Activated T-helper 1 cell treated with anti-CD3 and anti-CD28 coated beads, Interleukin-12 subunit alpha, Interleukin-12 subunit beta, Interleukin-2, Interleukin-4 antibody, amounts not matched to agents 30 ng/mL and 10 ng/mL and 1 ng/mL, durations not matched to agents 14 hours and 24 hours and 36 hours (primary cell): ENCODE measurements at regions of chr11 and their contacts with region 1.

Region 1: DNA sequence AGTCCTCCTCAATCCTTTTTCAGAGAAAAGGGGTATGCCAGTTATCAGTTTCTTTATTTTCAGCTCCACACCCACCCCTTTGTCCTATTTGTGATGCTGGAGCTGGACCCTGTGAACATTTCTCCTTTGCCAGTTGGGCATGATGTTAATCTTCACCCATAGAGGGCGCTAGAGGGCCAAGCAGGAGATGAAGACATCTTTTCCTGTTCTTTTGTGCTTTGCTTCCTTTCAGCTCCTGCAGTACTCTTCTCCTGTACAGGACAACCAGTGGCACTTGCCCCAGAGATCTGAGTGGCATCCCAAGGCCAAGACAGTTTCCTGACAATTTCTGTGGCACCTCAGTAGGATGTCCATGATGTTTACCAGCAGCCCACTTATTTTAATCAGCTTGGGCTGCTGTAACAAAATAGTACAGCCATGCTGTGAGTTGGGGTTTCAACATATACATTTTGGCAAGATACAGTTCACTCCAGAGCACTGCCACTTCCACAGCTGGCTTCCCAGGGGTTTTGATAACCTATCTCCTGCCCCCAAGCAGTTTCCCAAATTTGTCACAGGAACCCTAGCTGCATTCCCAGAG is 4.6 kb downstream of the SAA2 start:
- DNase-seq: peak; percentile 65
- H3K4me3 Mint-ChIP-seq: no peak overlapping the region
- H3K27ac Mint-ChIP-seq: peak overlapping the region; percentile 10
- H3K4me1 Mint-ChIP-seq: peaks cover 39% of the 10 kb centered on the region
- H3K27me3 Mint-ChIP-seq: peaks cover 27% of the 10 kb centered on the region

Region 2: DNA sequence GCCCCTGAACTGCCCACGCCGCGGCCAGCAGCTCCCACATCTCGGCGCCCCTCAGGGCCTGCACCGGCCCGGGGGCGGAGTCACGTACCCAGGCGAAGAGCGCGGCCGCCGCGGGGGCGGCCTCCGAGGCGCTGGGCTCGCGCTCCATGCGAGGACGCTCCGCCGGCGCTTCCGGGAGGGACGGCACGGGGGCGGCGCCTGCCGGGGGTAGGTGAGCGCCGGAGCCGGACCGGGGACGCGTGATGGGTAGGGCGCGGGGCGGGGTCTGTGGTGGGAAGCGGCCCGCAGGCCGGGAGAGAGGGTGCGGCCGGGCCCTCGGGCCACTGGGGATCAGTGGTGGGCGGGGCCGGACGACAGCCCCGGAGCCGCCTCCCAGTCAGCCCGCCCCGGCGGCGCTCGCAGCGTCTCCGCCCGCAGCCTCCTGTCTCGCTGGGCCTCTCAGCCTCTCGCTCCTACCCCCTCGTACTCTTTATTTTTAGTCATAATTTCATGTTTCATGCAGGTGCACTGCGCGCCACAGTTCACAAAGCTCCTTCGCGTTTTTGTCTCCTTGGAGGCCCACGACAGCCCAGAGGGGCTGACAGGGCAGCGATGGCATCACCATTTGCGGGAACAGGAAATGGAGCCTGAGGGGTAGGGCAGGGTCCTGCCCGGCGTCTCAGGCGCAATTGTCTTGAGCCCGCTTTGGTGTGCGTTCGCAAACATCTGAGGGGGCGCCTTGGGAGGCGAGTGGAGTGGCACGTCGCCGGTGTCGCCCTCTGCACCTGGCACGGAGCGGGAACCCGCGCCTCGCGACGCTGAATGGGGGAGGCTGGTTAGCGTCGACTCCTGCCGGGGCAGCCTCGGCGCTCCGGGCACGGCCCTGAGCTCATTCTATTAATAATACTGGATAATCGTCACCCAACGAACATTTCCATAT is 230.8 kb before region 1 on chr11 and contains the start of gene SERGEF:
- intact Hi-C with region 1: loop called (anchors 10 kb)
- DNase-seq: peak; percentile 92
- H3K4me3 Mint-ChIP-seq: peak within 1 kb of the TSS; percentile 97
- H3K27ac Mint-ChIP-seq: peak within 1 kb of the TSS; percentile 98
- H3K4me1 Mint-ChIP-seq: peaks cover 44% of the 10 kb centered on the region
- H3K27me3 Mint-ChIP-seq: peaks cover 5% of the 10 kb centered on the region
- total RNA-seq, gene SERGEF: 24.5 and 32.8 TPM in 2 replicates

Region 3: GRCh38 chr11:18280438-18281045 is 36.7 kb after region 1 on chr11:
- intact Hi-C with region 1: loop called (anchors 5 kb)
- DNase-seq: no peak
- H3K4me3 Mint-ChIP-seq: peak overlapping the region; percentile 57
- H3K27ac Mint-ChIP-seq: peak overlapping the region; percentile 70
- H3K4me1 Mint-ChIP-seq: peaks cover 24% of the 10 kb centered on the region
- H3K27me3 Mint-ChIP-seq: no peaks in the 10 kb centered on the region

Region 4: DNA sequence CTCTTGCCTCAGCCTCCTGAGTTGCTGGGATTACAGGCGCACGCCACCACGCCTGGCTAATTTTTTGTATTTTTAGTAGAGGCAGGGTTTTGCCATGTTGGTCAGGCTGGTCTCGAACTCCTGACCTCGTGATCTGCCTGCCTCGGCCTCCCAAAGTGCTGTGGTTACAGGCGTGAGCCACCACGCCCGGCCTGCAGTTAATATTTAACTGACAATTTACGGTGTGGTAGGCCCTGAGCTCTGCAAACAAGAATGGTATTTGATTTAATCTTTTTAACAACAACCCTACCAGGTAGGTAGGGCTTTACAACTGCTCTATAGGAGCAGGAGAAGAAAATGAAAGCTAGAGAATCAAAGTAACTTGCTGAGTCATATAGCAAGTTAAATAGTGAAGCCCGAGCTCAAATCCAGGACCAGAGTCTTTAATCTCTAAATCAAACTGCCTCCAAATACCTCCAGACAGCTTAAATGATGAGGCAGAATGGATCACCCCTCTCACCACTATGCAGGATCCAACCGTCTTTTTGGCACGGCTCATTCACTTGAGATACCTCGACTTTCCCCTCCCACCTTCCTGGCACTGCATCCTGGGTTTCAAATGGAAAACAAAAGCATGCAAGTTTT is 335.2 kb after region 1 on chr11:
- intact Hi-C with region 1: loop called (anchors 5 kb)
- DNase-seq: peak; percentile 21
- H3K4me3 Mint-ChIP-seq: peak overlapping the region; percentile 61
- H3K27ac Mint-ChIP-seq: peak overlapping the region; percentile 80
- H3K4me1 Mint-ChIP-seq: peaks cover 65% of the 10 kb centered on the region
- H3K27me3 Mint-ChIP-seq: no peaks in the 10 kb centered on the region

Region 5: DNA sequence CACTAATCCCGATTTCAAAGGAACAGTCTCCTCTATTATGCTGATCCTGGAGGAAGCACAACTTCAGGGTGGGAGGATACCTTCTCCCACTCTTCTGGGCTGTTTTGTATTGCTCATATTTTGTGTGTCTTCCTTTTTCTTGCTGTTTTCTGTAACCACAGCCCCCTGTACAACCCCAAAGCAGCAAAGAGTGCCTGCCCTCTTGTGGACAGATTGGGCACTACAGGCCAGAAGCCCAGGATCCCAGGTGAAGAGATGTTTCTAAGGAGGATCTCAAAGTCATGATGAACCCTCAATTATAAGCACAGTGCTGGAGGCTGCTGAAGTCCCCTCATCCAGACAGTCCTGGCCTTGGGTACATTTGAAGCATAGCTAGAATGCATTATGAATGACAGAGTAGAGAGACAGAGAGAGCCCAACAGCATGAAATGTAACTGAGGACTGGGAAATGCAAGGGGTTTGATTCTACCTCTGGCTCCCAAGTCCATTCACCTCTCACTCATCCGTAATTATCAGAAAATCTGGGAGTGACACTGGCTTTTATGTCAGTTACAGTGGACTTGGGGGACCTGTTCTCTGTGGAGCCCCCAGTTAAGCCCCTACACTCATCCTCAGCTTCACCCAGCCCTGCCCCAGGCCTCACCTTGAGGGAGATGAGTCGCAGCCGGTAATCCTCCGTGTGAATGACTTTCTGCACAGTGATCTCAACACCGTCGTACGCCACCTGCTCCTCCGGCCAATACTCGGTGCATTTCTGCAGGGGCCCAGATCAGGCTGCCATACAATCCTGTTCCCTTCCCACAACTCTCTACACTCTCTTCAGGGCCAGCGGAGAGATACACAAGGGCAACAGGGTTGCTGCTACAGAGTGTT is 488.3 kb after region 1 on chr11:
- intact Hi-C with region 1: loop called (anchors 1 kb)
- DNase-seq: peak; percentile 47
- H3K4me3 Mint-ChIP-seq: no peak overlapping the region
- H3K27ac Mint-ChIP-seq: no peak overlapping the region
- H3K4me1 Mint-ChIP-seq: no peaks in the 10 kb centered on the region
- H3K27me3 Mint-ChIP-seq: no peaks in the 10 kb centered on the region